Activated naive CD4-positive, alpha-beta T cell treated with anti-CD3 and anti-CD28 coated beads for 36 hours (primary cell): ENCODE measurements at regions of chr19 and their contacts with region 1.

Region 1: GRCh38 chr19:5031231-5032100 is 62.6 kb downstream of the KDM4B start:
- DNase-seq: peak; percentile 89
- H3K4me3 Mint-ChIP-seq: no peak overlapping the region
- H3K27ac Mint-ChIP-seq: no peak overlapping the region
- H3K4me1 Mint-ChIP-seq: peaks cover 2% of the 10 kb centered on the region
- H3K27me3 Mint-ChIP-seq: no peaks in the 10 kb centered on the region

Region 2: GRCh38 chr19:4867534-4868285 is 163.8 kb before region 1 on chr19 and contains the start of gene PLIN3:
- CTCF ChIA-PET with region 1: interaction called, 23 read pairs
- intact Hi-C with region 1: loop called (anchors 1 kb)
- DNase-seq: peak; percentile 97
- H3K4me3 Mint-ChIP-seq: peak within 1 kb of the TSS; percentile 74
- H3K27ac Mint-ChIP-seq: peak within 1 kb of the TSS; percentile 36
- H3K4me1 Mint-ChIP-seq: peaks cover 19% of the 10 kb centered on the region
- H3K27me3 Mint-ChIP-seq: peaks cover 3% of the 10 kb centered on the region
- total RNA-seq, gene PLIN3: 16.1 to 17.1 TPM

Region 3: GRCh38 chr19:4909897-4910593 is 121.4 kb before region 1 on chr19:
- CTCF ChIA-PET with region 1: interaction called, 5 read pairs
- intact Hi-C with region 1: loop called (anchors 2 kb)
- DNase-seq: peak; percentile 97
- H3K4me3 Mint-ChIP-seq: peak overlapping the region; percentile 85
- H3K27ac Mint-ChIP-seq: peak overlapping the region; percentile 86
- H3K4me1 Mint-ChIP-seq: peaks cover 53% of the 10 kb centered on the region
- H3K27me3 Mint-ChIP-seq: no peaks in the 10 kb centered on the region

Region 4: GRCh38 chr19:4916292-4917082 is 115.0 kb before region 1 on chr19:
- CTCF ChIA-PET with region 1: interaction called, 5 read pairs
- intact Hi-C with region 1: loop called (anchors 1 kb)
- DNase-seq: peak; percentile 55
- H3K4me3 Mint-ChIP-seq: peak overlapping the region; percentile 75
- H3K27ac Mint-ChIP-seq: peak overlapping the region; percentile 88
- H3K4me1 Mint-ChIP-seq: peaks cover 56% of the 10 kb centered on the region
- H3K27me3 Mint-ChIP-seq: no peaks in the 10 kb centered on the region

Region 5: DNA sequence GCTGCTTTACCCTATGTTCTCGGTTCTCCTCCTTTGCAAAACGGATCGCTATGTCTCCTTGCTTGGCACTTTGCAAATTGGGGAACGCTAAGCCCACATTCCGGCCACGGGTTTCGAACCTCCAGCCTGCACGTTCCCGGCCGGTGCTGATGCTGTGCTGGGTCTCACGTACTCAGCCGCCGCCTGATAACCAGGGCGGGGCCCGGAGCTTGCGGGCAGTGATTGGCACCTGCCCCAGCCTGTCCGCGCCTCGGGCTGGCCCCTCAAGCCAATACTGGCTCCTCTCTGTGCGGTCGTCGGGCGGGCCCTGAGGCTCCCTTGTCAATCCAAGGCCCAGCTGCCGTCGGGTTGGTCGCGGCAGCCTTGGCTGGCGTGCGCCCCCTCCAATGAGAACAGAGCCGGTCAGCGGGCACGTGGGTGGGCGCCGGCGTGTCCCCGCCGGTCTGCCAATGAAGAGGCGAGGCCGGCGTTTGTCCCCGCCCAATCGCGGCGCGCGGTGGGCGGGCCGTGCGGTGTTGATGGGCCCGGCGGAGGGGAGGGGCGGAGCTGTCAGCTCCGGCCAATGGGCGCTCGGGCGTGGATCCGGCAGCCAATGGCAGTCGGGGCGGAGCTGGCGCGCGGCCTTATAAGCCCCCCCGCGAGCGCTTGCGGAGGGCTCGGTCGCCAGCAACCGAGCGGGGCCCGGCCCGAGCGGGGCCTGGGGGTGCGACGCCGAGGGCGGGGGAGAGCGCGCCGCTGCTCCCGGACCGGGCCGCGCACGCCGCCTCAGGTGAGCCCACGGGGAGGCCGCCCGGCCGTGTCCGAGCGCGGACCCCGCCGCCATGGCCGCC is 62.8 kb before region 1 on chr19 and contains the start of gene KDM4B:
- CTCF ChIA-PET with region 1: interaction called, 16 read pairs
- intact Hi-C with region 1: no loop called
- DNase-seq: peak; percentile 98
- H3K4me3 Mint-ChIP-seq: peak within 1 kb of the TSS; percentile 88
- H3K27ac Mint-ChIP-seq: peak within 1 kb of the TSS; percentile 75
- H3K4me1 Mint-ChIP-seq: peaks cover 30% of the 10 kb centered on the region
- H3K27me3 Mint-ChIP-seq: no peaks in the 10 kb centered on the region
- total RNA-seq, gene KDM4B: 10.5 to 12.7 TPM

Region 6: GRCh38 chr19:5001615-5002014 is 29.9 kb before region 1 on chr19:
- CTCF ChIA-PET with region 1: interaction called, 35 read pairs
- intact Hi-C with region 1: loop called (anchors 1 kb)
- DNase-seq: peak; percentile 46
- H3K4me3 Mint-ChIP-seq: no peak overlapping the region
- H3K27ac Mint-ChIP-seq: no peak overlapping the region
- H3K4me1 Mint-ChIP-seq: peaks cover 6% of the 10 kb centered on the region
- H3K27me3 Mint-ChIP-seq: no peaks in the 10 kb centered on the region

Region 7: GRCh38 chr19:5048091-5048726 is 16.7 kb after region 1 on chr19:
- CTCF ChIA-PET with region 1: no interaction called
- intact Hi-C with region 1: no loop called
- DNase-seq: peak; percentile 65
- H3K4me3 Mint-ChIP-seq: no peak overlapping the region
- H3K27ac Mint-ChIP-seq: no peak overlapping the region
- H3K4me1 Mint-ChIP-seq: peaks cover 1% of the 10 kb centered on the region
- H3K27me3 Mint-ChIP-seq: no peaks in the 10 kb centered on the region